ENCODE measurements at regions of chr1 and their contacts with region 1.

Region 1: DNA sequence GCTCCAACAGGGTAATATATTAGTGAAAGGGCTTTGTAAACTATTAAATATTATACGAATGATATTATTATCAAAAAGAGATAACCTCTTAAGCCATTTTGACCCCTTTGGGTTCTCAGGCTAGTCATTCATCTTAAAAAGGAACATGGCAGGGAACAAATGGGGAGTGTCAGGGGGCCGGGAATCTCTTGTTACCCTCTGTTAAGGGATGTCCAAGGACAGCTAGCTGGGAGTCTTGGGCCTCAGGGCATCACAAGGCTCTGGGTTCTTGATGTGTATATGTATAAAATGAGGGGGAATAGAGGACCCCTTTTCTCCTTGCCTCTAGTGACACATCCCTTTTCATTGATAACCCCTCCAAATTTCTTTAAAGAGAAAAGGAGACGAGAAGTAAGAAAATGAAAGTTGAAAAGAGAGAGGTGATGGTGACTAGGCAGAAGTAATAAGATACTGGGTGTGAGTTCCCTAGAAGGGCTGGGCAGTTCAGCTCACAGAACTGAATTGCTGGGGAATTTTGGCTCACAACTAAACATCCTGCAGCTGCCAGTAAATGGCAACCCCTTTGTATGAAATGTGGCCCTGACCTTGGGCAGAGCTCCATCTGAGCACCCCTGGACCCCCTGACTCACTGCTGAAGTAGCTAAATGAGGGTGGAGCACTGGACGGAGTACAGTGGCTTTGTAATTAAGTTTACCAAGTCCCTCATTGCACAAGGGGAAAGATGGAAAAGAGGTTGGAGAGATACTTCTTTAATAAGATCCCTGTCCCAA is 20.0 kb upstream of the ZNF326 start:
- H3K4me3 Mint-ChIP-seq: peak overlapping the region; percentile 60
- H3K27ac Mint-ChIP-seq: peak overlapping the region; percentile 95
- H3K4me1 Mint-ChIP-seq: peaks cover 59% of the 10 kb centered on the region
- H3K27me3 Mint-ChIP-seq: no peaks in the 10 kb centered on the region

Region 2: DNA sequence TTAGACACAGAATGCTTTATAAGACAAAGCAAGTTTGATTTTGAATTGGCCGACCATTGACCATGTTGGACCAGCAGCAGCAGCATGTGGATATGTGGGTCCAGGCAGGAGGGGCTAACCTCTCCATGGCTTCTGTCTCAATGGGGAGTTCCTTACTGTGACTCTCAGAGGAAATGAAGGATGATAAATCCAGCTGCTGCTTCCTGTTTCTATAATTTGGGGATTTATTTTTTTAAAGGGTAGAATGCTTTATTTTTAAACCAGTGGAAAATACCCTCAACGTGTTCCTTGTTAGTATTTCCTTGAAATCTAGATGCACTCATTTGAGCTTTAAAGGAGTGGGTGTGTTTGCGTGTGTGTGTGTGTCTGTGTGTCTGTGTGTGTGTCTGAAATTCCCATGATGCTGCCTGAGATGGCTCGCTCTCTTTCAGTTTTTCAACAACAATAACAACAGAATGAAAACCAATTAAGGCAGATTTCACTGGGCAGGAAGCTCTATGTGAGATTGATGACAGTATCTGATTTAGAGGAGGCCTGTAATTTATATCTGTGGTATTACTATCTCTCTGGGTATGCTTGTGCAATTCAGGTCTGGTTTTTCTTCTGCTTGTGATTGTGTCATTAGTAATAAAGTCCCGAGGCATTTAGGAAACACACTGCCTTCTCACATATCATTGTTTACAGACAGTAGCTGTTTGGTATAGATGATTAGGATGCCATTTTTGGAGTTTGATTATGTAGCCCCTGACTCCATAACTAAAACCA is 66.0 kb before region 1 on chr1:
- intact Hi-C with region 1: loop called (anchors 10 kb)
- H3K4me3 Mint-ChIP-seq: peak overlapping the region; percentile 30
- H3K27ac Mint-ChIP-seq: peak overlapping the region; percentile 77
- H3K4me1 Mint-ChIP-seq: peaks cover 69% of the 10 kb centered on the region
- H3K27me3 Mint-ChIP-seq: no peaks in the 10 kb centered on the region

Region 3: GRCh38 chr1:89942825-89943688 is 31.8 kb before region 1 on chr1:
- intact Hi-C with region 1: loop called (anchors 5 kb)
- H3K4me3 Mint-ChIP-seq: no peak overlapping the region
- H3K27ac Mint-ChIP-seq: peak overlapping the region; percentile 78
- H3K4me1 Mint-ChIP-seq: peaks cover 51% of the 10 kb centered on the region
- H3K27me3 Mint-ChIP-seq: no peaks in the 10 kb centered on the region